ENCODE measurements at regions of chr4 and their contacts with region 1.

Region 1: GRCh38 chr4:145618932-145619638 is at the start of gene MMAA:
- DNase-seq: peak; percentile 91 to 95 (median 93)
- H3K4me3 ChIP-seq: peak within 1 kb of the TSS; percentile 85 to 97
- H3K4me3 Mint-ChIP-seq: peak within 1 kb of the TSS; percentile 87 to 100 (median 98)
- H3K27ac ChIP-seq: peak within 1 kb of the TSS; percentile 95
- H3K27ac Mint-ChIP-seq: peak within 1 kb of the TSS; percentile 98 to 100 (median 99)
- H3K4me1 ChIP-seq: peaks cover 32% of the 10 kb centered on the region
- H3K4me1 Mint-ChIP-seq: peaks cover 31 to 54% (median 36%) of the 10 kb centered on the region in 4 donors
- H3K27me3 ChIP-seq: no peaks in the 10 kb centered on the region
- H3K27me3 Mint-ChIP-seq: peaks cover 0 to 1% of the 10 kb centered on the region in 2 donors
- total RNA-seq, gene MMAA: 11.8 to 12.0 TPM

Region 2: DNA sequence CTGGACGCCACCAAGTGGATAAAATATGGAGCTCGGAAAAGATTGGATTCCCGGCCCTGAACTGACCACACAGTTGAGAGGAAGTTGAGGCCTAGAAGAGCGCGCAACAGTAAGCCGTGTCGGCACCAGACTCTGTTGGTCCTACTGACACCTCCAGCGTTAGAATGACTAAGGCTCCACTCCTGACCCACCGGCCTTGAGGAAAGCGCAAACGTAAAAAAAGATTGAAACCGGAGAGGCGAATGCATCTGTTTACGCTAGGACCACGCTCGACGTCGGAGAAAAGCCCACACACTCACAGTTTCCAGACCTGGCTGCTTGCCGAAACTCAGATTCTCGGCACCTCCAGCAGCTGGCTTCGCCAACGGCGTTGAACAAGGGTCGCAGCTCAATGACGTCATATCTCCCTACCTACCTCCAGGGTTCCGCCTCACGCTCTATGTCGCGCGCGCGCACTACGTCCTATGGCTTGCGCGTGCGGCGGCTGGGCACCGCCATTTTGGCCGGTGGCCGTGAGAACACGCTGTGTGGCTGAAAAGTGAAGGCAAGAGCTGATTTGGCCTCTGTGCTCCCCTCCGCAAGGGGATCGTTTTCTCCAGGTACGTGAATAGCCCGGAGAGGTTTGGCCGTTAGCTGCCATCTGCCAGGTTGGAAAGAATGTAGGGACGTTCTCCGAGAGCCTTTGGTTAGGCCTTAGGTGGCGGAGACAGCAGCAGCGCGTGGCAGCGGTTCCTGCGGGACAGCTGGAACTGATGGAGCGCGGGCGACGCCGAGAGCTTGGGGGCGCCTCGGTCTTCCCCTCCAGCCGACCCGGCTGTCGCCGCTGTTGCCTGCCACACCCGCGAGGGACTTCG is 521.0 kb before region 1 on chr4 and contains the starts of genes ABCE1 and ANAPC10:
- CTCF ChIA-PET with region 1: interaction called, 6 read pairs
- POLR2A ChIA-PET with region 1: interaction called, 13 read pairs
- intact Hi-C with region 1: loop called (anchors 1 kb)
- DNase-seq: peak; percentile 92 to 98 (median 95)
- H3K4me3 ChIP-seq: peak within 1 kb of the TSS; percentile 82 to 96
- H3K4me3 Mint-ChIP-seq: peak within 1 kb of the TSS; percentile 91 to 98 (median 97)
- H3K27ac ChIP-seq: peak within 1 kb of the TSS; percentile 83
- H3K27ac Mint-ChIP-seq: peak within 1 kb of the TSS; percentile 97 to 99 (median 99)
- H3K4me1 ChIP-seq: peaks cover 52% of the 10 kb centered on the region
- H3K4me1 Mint-ChIP-seq: peaks cover 20 to 47% (median 35%) of the 10 kb centered on the region in 4 donors
- H3K27me3 ChIP-seq: no peaks in the 10 kb centered on the region
- H3K27me3 Mint-ChIP-seq: no peaks in the 10 kb centered on the region
- total RNA-seq, gene ABCE1: 67.9 to 71.4 TPM
- total RNA-seq, gene ANAPC10: 14.8 to 15.7 TPM

Region 3: DNA sequence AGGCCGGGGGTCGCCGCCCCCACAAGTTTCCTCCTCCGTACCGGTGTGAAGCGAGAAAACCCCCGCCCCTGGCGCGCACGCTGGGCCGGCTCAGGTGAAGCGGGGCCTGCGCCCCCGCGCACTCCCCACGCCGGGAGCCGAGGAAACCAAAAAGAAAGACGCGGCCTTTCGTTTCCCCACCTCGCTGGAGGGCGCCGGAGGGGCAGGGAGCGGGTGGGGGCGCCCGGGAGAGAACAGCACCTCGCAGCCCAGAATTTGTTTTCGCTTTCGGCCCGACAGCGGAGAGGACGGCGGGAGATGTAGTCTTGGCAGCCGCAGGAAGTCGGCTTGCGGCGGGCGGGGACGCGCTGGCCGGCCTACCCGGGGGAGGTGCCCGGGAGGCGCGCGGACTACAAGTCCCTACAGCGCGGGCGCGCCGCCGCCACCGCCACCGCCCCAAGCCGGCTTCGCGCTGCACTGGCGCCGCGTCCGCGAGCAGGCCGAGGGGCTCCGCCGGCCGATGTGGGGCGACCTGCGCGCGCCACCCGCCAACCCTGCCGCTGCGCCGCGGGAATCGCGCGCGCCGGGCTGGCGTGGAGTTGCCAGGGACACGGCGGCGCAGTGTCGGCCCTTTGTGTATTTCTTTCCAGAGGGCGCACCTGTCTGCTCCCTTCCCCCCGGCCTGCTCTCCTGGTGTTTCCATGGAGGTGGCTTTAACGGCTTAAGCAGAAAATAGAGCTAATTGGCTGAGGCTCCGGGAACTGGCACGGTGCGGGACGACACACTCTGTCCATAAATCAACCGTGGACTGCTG is 438.6 kb before region 1 on chr4 and contains the start of gene OTUD4:
- CTCF ChIA-PET with region 1: interaction called, 16 read pairs
- POLR2A ChIA-PET with region 1: interaction called, 17 read pairs
- intact Hi-C with region 1: loop called (anchors 1 kb)
- DNase-seq: peak; percentile 95 to 97 (median 96)
- H3K4me3 ChIP-seq: peak within 1 kb of the TSS; percentile 84 to 96
- H3K4me3 Mint-ChIP-seq: peak within 1 kb of the TSS; percentile 89 to 98 (median 95)
- H3K27ac ChIP-seq: peak within 1 kb of the TSS; percentile 94
- H3K27ac Mint-ChIP-seq: peak within 1 kb of the TSS; percentile 96 to 99 (median 98)
- H3K4me1 ChIP-seq: peaks cover 40% of the 10 kb centered on the region
- H3K4me1 Mint-ChIP-seq: peaks cover 15 to 40% (median 28%) of the 10 kb centered on the region in 4 donors
- H3K27me3 ChIP-seq: no peaks in the 10 kb centered on the region
- H3K27me3 Mint-ChIP-seq: no peaks in the 10 kb centered on the region
- total RNA-seq, gene OTUD4: 60.1 to 61.3 TPM

Region 4: GRCh38 chr4:145602129-145602760 is 16.8 kb before region 1 on chr4:
- CTCF ChIA-PET with region 1: interaction called, 12 read pairs
- POLR2A ChIA-PET with region 1: no interaction called
- intact Hi-C with region 1: no loop called
- DNase-seq: no peak
- H3K4me3 ChIP-seq: no peak overlapping the region
- H3K4me3 Mint-ChIP-seq: no peak overlapping the region
- H3K27ac ChIP-seq: no peak overlapping the region
- H3K27ac Mint-ChIP-seq: no peak overlapping the region
- H3K4me1 ChIP-seq: no peaks in the 10 kb centered on the region
- H3K4me1 Mint-ChIP-seq: no peaks in the 10 kb centered on the region
- H3K27me3 ChIP-seq: no peaks in the 10 kb centered on the region
- H3K27me3 Mint-ChIP-seq: peaks cover 12 to 14% of the 10 kb centered on the region in 2 donors

Region 5: DNA sequence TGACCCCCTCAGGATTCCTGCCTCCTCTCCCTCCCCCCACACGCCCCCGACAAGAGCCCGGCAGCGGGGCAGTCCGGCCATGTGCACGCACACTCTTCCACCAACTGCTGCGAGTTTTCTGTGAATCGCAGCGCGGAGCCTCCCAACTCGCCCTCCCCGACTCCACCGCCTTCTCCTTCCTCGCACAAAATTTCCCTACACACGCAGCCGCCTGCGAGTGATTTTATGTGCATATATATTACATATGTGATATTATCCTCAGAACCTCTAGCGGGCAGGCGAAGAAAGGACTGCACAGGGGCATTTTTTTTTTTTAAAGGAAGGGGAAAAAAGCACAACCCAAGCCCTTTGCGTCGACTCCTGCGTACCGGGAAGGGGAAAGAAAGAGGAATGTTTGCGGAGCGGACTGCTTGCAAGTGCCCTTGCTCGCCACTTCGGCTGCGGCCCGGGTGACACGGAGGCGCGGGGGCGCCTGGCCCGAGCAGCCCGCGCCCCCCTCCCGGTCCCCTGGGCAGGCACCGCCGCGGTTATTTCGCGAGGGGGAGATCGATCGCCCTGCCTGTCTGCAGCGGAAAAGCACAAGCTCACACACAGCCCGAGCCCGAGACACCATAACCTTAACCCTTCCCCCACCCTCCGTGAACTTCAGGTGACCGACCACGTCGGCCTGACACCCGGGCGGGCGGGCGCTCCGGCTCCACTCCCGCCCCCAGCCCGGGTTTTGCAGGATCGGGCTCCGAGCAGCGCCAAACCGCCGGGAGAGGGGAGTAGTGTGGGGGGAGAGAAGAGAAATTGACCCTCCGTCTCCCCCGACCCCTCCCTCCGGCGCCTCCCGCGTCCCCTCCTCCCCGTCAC is 317.3 kb after region 1 on chr4:
- CTCF ChIA-PET with region 1: interaction called, 3 read pairs
- POLR2A ChIA-PET with region 1: interaction called, 5 read pairs
- intact Hi-C with region 1: loop called (anchors 1 kb)
- DNase-seq: peak; percentile 62 to 83 (median 66)
- H3K4me3 ChIP-seq: peak overlapping the region; percentile 69 to 73
- H3K4me3 Mint-ChIP-seq: peak overlapping the region; percentile 91 to 99 (median 95)
- H3K27ac ChIP-seq: peak overlapping the region; percentile 39
- H3K27ac Mint-ChIP-seq: peak overlapping the region; percentile 86 to 95 (median 91)
- H3K4me1 ChIP-seq: peaks cover 15% of the 10 kb centered on the region
- H3K4me1 Mint-ChIP-seq: peaks cover 19 to 44% (median 27%) of the 10 kb centered on the region in 4 donors
- H3K27me3 ChIP-seq: no peaks in the 10 kb centered on the region
- H3K27me3 Mint-ChIP-seq: peaks cover 3 to 5% of the 10 kb centered on the region in 2 donors

Region 6: GRCh38 chr4:146945556-146946374 is 1326.7 kb after region 1 on chr4 and contains the start of gene TTC29:
- CTCF ChIA-PET with region 1: no interaction called
- POLR2A ChIA-PET with region 1: no interaction called
- intact Hi-C with region 1: loop called (anchors 10 kb)
- DNase-seq: peak; percentile 78 to 86 (median 81)
- H3K4me3 ChIP-seq: peak within 1 kb of the TSS; percentile 4 to 54
- H3K4me3 Mint-ChIP-seq: peak within 1 kb of the TSS; percentile 78 to 90 (median 89)
- H3K27ac ChIP-seq: no peak within 1 kb of the TSS
- H3K27ac Mint-ChIP-seq: peak within 1 kb of the TSS in 6 of 7 donors; percentile 16 to 73 (median 36)
- H3K4me1 ChIP-seq: peaks cover 18% of the 10 kb centered on the region
- H3K4me1 Mint-ChIP-seq: peaks cover 19 to 36% (median 28%) of the 10 kb centered on the region in 4 donors
- H3K27me3 ChIP-seq: no peaks in the 10 kb centered on the region
- H3K27me3 Mint-ChIP-seq: peaks cover 0 to 4% of the 10 kb centered on the region in 2 donors
- total RNA-seq, gene TTC29: not detected

Measured in CD4-positive, alpha-beta memory T cell (primary cell).